ENCODE measurements at regions of chr15 and their contacts with region 1.

Region 1: DNA sequence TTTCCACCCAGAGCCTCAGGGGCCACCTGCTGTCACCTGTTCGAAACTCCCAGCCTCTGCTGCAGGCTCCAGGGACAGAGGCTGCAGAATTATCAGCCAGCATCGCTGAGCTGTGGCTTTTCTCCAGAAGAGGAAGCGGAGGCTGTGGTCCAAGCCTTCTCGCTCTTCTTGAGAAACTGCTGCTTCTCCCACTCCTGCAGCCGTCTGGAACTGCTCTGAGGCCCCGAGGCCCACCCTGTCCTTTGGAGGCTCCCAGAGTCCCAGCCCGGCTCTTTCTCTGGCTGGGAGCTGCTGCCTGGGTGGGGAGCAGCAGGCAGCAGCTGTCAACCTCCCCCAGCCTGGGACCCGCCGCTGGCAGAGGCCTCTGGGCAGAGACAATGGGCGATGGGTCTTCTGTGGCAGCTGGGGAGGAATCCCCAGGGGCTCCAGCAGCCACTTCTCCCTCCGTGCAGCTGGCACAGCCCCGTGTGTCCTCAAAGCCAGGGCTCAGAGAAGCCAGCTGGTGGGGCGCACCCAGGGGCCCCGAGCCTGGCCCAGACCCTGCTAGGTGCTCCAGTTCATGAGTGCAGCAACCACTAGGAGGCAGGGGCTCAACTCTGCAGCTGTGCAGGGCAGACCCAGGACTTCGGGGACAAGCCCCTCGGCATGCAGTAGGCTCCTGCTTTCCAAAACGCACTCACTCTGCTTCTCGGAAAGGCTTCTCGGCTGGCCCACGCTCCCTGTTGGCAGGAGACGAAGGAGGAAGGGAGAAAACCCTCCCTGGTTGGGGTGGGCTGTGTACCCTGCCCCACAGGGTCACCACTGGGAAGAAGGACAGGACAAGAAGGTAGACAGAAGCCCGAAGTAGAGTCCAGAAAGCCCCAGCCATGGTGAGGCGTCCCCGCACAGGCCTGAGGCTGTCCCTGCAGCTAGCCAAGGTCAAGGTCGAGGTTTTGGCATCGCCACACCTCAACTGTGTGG is 49.9 kb upstream of the FURIN start:
- DNase-seq: peak; percentile 29
- H3K4me3 ChIP-seq: no peak overlapping the region
- H3K27ac ChIP-seq: peak overlapping the region; percentile 64
- H3K4me1 ChIP-seq: peaks cover 21% of the 10 kb centered on the region
- H3K27me3 ChIP-seq: no peaks in the 10 kb centered on the region
- CTCF ChIP-seq: peak; percentile 29

Region 2: DNA sequence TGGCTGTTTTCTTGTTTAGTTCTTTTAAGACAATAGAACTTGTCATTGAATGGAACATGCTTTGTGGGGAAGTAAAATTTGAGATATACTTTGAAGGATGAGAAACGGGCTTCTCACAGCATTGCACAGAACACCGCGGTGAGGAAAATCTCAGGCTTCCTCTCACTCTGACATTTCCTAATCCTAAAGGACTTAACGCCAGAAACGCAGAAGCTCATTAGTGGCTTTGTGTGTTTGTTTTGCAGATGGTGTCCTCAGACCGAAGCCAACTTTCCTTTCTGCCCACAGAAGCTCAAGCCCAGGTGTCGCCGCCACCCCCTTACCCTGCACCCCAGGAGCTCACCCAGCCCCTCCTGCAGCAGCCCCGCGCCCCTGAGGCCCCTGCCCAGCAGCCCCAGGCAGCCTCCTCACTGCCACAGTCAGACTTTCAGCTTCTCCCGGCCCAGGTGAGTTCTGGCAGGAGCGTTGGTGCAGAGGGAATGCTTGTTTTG is 180.3 kb before region 1 on chr15:
- intact Hi-C with region 1: no loop called
- DNase-seq: no peak
- H3K4me3 ChIP-seq: no peak overlapping the region
- H3K27ac ChIP-seq: no peak overlapping the region
- H3K4me1 ChIP-seq: no peaks in the 10 kb centered on the region
- H3K27me3 ChIP-seq: no peaks in the 10 kb centered on the region
- CTCF ChIP-seq: no peak

Region 3: GRCh38 chr15:90869601-90870353 is 51.2 kb after region 1 on chr15:
- intact Hi-C with region 1: loop called (anchors 10 kb)
- DNase-seq: peak; percentile 83
- H3K4me3 ChIP-seq: peak overlapping the region; percentile 93
- H3K27ac ChIP-seq: peak overlapping the region; percentile 98
- H3K4me1 ChIP-seq: peaks cover 74% of the 10 kb centered on the region
- H3K27me3 ChIP-seq: no peaks in the 10 kb centered on the region
- CTCF ChIP-seq: no peak

Region 4: GRCh38 chr15:90946538-90946937 is 128.0 kb after region 1 on chr15:
- intact Hi-C with region 1: no loop called
- DNase-seq: no peak
- H3K4me3 ChIP-seq: no peak overlapping the region
- H3K27ac ChIP-seq: no peak overlapping the region
- H3K4me1 ChIP-seq: no peaks in the 10 kb centered on the region
- H3K27me3 ChIP-seq: no peaks in the 10 kb centered on the region
- CTCF ChIP-seq: no peak